Activated naive CD4-positive, alpha-beta T cell treated with anti-CD3 and anti-CD28 coated beads for 36 hours (primary cell): ENCODE measurements at regions of chr14 and their contacts with region 1.

Region 1: DNA sequence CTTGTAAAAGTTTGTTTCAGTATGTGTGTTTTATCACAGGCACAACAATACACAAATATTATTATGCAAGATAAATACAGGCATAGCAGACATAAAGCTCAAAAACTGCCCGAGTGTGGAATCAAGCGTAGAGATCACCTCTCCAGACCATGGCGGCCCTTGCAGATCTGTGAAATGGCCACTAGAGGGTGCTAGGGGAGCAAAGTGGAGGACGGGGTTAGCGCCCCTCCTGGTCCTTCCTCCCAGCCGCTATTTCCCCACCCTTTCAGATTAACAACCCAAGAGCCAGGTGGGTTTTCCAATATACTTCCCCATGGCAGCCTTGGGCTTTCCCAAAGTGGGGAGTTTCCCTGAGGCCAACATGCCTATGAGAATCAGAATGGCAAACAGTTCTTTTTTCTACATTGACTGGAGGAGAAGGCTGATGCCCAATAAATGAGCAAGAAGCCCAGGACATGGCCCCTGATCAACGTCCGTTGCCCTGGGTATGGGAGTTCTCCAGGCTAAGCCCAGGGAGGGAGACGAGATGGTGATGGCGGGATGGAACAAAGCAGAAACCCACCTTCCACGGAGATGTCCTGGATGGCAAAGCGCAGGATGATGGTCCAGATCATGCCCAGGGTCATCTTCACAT is 67.4 kb downstream of the ACTN1 start:
- DNase-seq: peak; percentile 92
- H3K4me3 Mint-ChIP-seq: no peak overlapping the region
- H3K27ac Mint-ChIP-seq: no peak overlapping the region
- H3K4me1 Mint-ChIP-seq: peaks cover 41% of the 10 kb centered on the region
- H3K27me3 Mint-ChIP-seq: no peaks in the 10 kb centered on the region

Region 2: DNA sequence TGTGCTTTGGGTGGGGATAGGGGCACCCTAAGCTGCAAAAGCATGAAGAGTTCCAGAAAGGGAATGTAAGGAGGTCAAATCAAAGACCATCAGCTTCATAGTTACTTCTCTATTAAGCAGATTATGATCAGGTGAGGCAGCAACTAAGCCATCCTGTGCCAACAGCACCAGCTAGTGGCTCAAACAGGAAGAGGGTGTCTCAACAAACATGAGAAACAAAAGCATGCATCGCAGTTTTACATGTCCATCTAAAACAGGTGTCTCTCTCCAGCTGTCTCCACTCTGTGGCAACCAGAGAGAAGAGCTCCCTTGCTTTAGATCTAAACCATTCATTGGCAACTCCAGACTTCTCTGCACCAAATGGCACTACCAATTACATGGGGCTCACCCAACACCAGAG is 14.5 kb after region 1 on chr14:
- CTCF ChIA-PET with region 1: interaction called, 28 read pairs
- intact Hi-C with region 1: no loop called
- DNase-seq: peak; percentile 49
- H3K4me3 Mint-ChIP-seq: no peak overlapping the region
- H3K27ac Mint-ChIP-seq: no peak overlapping the region
- H3K4me1 Mint-ChIP-seq: peaks cover 59% of the 10 kb centered on the region
- H3K27me3 Mint-ChIP-seq: no peaks in the 10 kb centered on the region

Region 3: DNA sequence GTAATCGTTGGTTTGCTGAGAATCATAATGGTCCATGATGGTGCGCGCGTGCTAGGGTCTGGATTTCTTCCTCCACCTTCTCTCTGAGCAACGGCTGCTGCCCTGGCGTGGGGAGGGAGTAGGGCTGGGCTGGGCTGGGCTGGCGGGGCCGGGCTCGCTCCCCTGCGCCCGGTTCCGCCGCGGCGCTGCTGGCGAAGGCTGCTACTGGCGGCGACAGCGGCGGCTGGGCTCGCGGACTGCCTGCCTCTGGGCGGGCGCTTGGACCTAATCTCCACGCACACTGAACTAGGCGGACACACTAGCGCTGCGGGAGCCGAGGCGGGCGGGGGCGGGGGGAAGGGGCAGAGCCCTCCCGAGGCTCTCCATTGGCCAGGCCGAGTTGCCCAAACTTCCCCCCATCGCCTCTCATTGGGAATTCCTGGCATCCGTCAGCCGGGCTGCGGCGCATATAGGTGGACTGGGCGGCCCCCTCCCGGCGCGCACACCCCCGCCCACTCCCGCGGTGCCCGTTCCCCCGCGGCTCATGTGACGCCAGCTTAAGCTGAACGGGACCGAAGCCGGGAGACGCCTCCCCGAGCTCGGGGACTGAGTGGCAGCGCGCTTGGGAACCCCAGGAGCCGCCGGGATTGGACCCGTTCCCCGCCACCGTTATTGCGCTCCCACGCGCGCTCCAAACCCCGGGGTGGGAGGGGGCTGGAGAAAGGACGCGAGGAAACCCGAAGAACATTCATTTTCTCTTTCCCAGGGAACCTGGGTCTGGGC is 67.5 kb after region 1 on chr14 and contains the start of gene ACTN1:
- CTCF ChIA-PET with region 1: interaction called, 6 read pairs
- intact Hi-C with region 1: loop called (anchors 1 kb)
- DNase-seq: peak; percentile 89
- H3K4me3 Mint-ChIP-seq: peak within 1 kb of the TSS; percentile 85
- H3K27ac Mint-ChIP-seq: peak within 1 kb of the TSS; percentile 87
- H3K4me1 Mint-ChIP-seq: peaks cover 32% of the 10 kb centered on the region
- H3K27me3 Mint-ChIP-seq: no peaks in the 10 kb centered on the region
- total RNA-seq, gene ACTN1: 79.7 to 80.6 TPM

Region 4: DNA sequence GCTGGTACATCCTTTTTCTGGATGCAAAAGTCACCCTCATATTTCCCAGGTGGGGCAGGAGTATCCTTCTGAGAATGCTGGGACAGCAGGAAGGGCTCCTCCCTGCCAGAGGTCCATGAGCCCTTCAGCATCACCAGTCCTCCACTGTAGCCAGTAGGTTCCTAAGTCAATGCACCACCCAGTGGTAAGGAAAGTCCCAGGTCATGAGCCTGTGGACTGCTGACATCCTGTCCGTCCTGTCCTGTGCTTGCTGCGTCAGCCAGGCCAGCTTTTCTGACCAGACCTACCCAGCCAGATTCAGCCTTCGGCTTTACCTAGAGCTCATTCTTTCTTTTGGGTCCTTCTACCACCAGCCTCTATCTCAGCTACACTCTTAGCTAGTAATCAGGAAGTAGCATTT is 90.4 kb after region 1 on chr14:
- CTCF ChIA-PET with region 1: interaction called, 23 read pairs
- intact Hi-C with region 1: loop called (anchors 1 kb)
- DNase-seq: peak; percentile 29
- H3K4me3 Mint-ChIP-seq: no peak overlapping the region
- H3K27ac Mint-ChIP-seq: no peak overlapping the region
- H3K4me1 Mint-ChIP-seq: peaks cover 3% of the 10 kb centered on the region
- H3K27me3 Mint-ChIP-seq: no peaks in the 10 kb centered on the region

Region 5: GRCh38 chr14:69090187-69090789 is 178.6 kb after region 1 on chr14:
- CTCF ChIA-PET with region 1: interaction called, 55 read pairs
- intact Hi-C with region 1: loop called (anchors 1 kb)
- DNase-seq: peak; percentile 54
- H3K4me3 Mint-ChIP-seq: no peak overlapping the region
- H3K27ac Mint-ChIP-seq: no peak overlapping the region
- H3K4me1 Mint-ChIP-seq: peaks cover 6% of the 10 kb centered on the region
- H3K27me3 Mint-ChIP-seq: no peaks in the 10 kb centered on the region

Region 6: DNA sequence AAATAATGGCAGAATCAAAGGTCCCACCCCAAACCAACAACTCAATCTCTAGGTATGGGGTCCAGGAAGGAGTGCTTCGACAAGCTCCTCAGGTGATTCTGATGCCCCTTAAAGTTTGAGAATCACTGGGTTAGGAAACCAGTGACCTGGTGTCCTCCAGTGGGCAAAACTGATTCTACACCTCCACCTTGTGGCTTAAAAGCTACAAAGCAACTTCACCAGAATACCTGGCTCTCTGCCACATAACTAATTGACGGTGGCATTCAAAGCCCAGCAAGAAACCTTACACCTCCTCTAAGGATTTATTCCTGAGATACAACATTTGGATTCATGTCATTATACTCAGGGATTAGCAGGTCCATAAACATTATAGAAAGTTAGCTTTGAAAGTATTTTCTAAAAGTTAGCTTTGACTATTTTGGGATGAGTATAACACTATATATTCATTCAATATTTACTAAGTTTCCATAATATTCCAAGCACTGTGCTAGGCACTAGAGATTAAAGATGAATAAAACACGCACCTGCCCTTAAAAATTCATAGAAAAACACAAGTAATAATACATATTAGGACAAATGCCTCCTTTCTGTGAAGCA is 195.8 kb after region 1 on chr14:
- CTCF ChIA-PET with region 1: interaction called, 31 read pairs
- intact Hi-C with region 1: loop called (anchors 1 kb)
- DNase-seq: peak; percentile 48
- H3K4me3 Mint-ChIP-seq: no peak overlapping the region
- H3K27ac Mint-ChIP-seq: no peak overlapping the region
- H3K4me1 Mint-ChIP-seq: peaks cover under 1% of the 10 kb centered on the region
- H3K27me3 Mint-ChIP-seq: no peaks in the 10 kb centered on the region